PC-3 (cell line): ENCODE measurements at regions of chr18 and their contacts with region 1.

Region 1: GRCh38 chr18:7168408-7168807 is 50.8 kb upstream of the LAMA1 start:
- DNase-seq: no peak
- ATAC-seq: no peak
- H3K4me3 ChIP-seq: no peak overlapping the region
- H3K27ac ChIP-seq: no peak overlapping the region
- H3K4me1 ChIP-seq: no peaks in the 10 kb centered on the region
- H3K27me3 ChIP-seq: peaks cover 48% of the 10 kb centered on the region
- CTCF ChIP-seq: no peak

Region 2: DNA sequence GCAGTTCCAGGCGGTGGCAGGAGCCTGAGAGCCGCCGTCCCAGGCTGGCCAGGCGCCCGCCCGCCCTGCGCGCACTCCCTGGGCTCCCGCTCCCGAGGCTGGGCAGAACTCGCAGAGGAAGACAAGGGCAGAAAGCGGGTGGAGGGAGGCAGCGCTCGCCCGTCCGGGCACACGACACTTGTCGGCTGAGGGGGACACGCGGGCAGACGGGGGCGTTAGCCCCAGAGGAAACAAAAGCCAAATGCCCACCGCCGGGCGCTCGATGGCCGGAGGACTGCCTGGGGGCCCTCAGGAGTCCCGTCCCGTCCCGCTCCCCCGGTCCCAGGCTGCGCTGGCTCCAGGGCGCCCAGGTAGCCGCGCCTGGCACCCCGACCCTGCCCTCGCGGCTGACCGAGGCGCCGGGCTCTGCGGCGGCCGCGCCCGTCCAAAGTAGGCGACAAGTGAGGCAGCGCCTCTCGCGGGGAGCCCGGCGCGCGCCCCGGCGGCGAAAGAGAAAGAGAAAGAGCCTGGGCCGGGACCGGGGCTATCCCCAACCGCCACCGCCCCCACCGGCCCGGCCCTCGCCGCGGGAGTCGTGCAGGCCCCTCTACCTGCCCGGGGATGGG is 754.2 kb before region 1 on chr18:
- CTCF ChIA-PET with region 1: no interaction called
- POLR2A ChIA-PET with region 1: interaction called, 15 read pairs
- intact Hi-C with region 1: no loop called
- DNase-seq: peak; percentile 16
- ATAC-seq: peak; percentile 75
- H3K4me3 ChIP-seq: peak overlapping the region; percentile 64
- H3K27ac ChIP-seq: no peak overlapping the region
- H3K4me1 ChIP-seq: 0 out of 2 replicates have a peak, but pooled peaks cover 4% of the 10 kb centered on the region
- H3K27me3 ChIP-seq: peaks cover 9% of the 10 kb centered on the region; the same call in 1 of the 2 replicates
- CTCF ChIP-seq: no peak